Panc1 (cell line): ENCODE measurements at regions of chr11 and their contacts with region 1.

Region 1: GRCh38 chr11:35138943-35139721 is at the start of gene CD44:
- DNase-seq: no peak
- ATAC-seq: peak; percentile 78
- H3K4me3 ChIP-seq: peak within 1 kb of the TSS; percentile 95 to 98
- H3K27ac ChIP-seq: peak within 1 kb of the TSS; percentile 97
- H3K4me1 ChIP-seq: peaks cover 55% of the 10 kb centered on the region
- H3K27me3 ChIP-seq: no peaks in the 10 kb centered on the region
- CTCF ChIP-seq: no peak
- total RNA-seq, gene CD44: 1,819 TPM

Region 2: DNA sequence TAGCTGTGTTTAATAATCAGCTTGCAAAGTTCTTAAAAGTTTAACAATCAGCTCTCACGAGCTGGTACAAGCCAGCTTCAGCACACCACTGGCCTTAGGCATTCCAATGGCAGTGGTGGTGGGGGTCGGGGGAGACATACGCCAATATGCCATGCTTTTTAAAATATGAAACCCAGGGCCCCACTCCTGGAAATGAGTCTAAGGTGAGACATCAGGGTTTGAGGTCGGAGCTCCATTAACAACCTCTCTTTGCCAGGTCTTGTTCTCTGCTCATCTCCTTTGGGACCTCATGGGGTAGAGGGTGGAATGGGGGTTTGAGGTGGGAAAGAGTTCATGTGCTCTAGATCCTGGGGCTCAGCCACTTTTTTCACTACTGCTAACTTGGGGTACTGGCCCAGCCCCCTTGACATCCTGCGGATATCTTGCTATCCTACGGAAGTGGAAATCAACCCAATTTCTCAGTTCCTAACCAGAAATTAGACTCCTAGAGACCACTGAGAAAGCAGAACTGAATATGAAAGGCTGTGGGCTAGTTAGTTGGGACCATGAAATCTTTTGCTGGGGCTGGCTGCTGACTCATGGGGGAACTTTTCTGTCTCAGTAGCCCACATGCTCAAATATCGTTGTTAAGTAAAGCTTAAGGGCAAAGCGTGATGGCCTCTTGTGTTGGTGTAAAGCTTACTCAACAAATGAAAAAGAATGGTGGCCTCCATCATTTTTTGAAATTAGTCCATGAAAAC is 132.6 kb before region 1 on chr11:
- CTCF ChIA-PET with region 1: no interaction called
- POLR2A ChIA-PET with region 1: interaction called, 18 read pairs
- in situ Hi-C with region 1: no loop called
- intact Hi-C with region 1: loop called (anchors 5 kb)
- DNase-seq: no peak
- ATAC-seq: no peak
- H3K4me3 ChIP-seq: no peak overlapping the region
- H3K27ac ChIP-seq: peak overlapping the region; percentile 100
- H3K4me1 ChIP-seq: peaks cover 62% of the 10 kb centered on the region
- H3K27me3 ChIP-seq: no peaks in the 10 kb centered on the region
- CTCF ChIP-seq: no peak

Region 3: GRCh38 chr11:35040221-35040942 is 98.8 kb before region 1 on chr11:
- CTCF ChIA-PET with region 1: no interaction called
- POLR2A ChIA-PET with region 1: interaction called, 10 read pairs
- in situ Hi-C with region 1: no loop called
- intact Hi-C with region 1: no loop called
- DNase-seq: peak; percentile 72
- ATAC-seq: peak; percentile 91
- H3K4me3 ChIP-seq: peak overlapping the region; percentile 35 to 58
- H3K27ac ChIP-seq: peak overlapping the region; percentile 95
- H3K4me1 ChIP-seq: peaks cover 35% of the 10 kb centered on the region
- H3K27me3 ChIP-seq: no peaks in the 10 kb centered on the region
- CTCF ChIP-seq: no peak

Region 4: DNA sequence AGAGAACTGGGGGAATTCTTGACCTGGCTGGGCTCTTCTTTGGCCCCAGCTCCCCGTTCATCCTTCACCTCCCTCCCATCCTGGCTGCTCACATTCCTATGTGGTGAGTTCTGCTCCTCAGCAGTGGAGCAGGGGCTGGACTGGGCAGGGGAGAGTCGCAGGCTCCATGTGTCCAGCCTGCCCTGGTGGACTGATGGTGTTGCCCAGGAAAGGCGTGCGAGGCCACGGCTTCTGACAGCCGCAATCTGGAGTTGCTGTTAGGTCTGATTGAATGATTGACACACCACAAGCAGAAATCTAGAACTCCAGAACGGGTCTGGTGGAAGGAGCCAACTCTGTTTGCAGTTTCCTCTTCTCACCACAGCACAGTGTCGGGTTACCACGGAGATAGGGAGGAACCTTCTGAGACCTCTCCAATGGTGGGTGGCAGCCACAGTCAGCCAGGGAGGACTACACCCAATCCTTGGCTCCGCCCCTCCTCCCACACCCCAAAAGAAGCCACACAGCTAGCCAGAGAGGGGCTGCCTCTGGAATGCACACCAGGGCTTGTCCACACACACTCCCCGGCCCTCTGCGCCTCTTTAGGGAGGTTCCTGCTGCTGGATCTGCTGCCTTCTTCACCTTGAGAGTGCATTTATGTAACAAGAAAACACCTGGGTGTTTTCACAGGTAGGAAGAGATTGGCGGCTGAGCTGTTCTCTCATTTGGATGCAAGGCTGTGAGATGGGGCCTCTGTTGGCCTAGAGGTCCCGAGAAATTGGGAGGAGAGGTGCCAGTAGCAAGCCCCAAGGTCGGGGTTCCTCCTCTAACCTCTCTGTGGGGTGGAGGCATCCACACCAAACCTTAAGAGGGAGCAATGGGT is 56.6 kb before region 1 on chr11:
- CTCF ChIA-PET with region 1: no interaction called
- POLR2A ChIA-PET with region 1: interaction called, 11 read pairs
- in situ Hi-C with region 1: no loop called
- intact Hi-C with region 1: loop called (anchors 5 kb)
- DNase-seq: peak; percentile 24
- ATAC-seq: peak; percentile 83
- H3K4me3 ChIP-seq: peak overlapping the region; percentile 11 to 36; a peak in 3 of 4 replicates
- H3K27ac ChIP-seq: peak overlapping the region; percentile 98
- H3K4me1 ChIP-seq: peaks cover 61% of the 10 kb centered on the region
- H3K27me3 ChIP-seq: no peaks in the 10 kb centered on the region
- CTCF ChIP-seq: no peak

Region 5: DNA sequence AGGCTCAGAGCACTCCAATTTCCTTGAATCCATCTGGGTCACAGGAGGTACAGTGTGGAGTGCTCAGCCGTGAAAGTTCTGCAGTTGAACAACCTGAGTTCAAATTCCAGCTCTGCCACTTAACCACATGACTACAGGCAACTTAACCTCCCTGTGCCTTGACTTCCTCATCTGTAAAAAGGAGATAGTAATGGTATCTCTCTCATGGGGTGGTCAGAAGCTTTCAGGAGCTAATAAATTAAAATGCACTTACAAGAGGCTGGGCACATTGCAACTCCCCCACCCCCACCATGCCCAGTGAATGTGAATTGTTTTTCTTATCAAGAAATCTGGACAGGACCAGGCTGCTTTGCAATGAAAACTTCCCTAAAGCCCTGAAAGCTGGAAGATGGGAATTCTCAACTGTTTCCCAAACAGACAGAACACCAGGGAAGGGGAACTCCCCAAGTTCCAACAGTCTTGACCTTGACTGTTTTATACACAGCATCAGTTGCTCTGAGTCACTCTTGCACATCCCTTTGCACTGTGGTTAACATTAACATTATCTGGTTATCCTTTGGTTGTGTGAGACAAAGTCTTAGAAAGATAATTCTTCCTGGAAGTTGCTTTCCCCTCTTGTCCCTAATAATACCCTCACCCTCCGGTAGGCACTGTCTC is 143.2 kb after region 1 on chr11:
- CTCF ChIA-PET with region 1: no interaction called
- POLR2A ChIA-PET with region 1: no interaction called
- in situ Hi-C with region 1: no loop called
- intact Hi-C with region 1: no loop called
- DNase-seq: no peak
- ATAC-seq: peak; percentile 73
- H3K4me3 ChIP-seq: no peak overlapping the region
- H3K27ac ChIP-seq: 0 out of 2 replicates have a peak overlapping the region, but pooled peaks have one; percentile 7
- H3K4me1 ChIP-seq: no peaks in the 10 kb centered on the region
- H3K27me3 ChIP-seq: no peaks in the 10 kb centered on the region
- CTCF ChIP-seq: no peak